ENCODE measurements at regions of chr19 and their contacts with region 1.

Region 1: GRCh38 chr19:29478578-29479565 is 46.9 kb upstream of the VSTM2B start:
- DNase-seq: peak; percentile 90
- ATAC-seq: peak; percentile 100
- H3K4me3 Mint-ChIP-seq: no peak overlapping the region
- H3K27ac Mint-ChIP-seq: no peak overlapping the region
- H3K4me1 Mint-ChIP-seq: no peaks in the 10 kb centered on the region
- H3K27me3 Mint-ChIP-seq: peaks cover 12% of the 10 kb centered on the region
- CTCF ChIP-seq: peak; percentile 39; the same call in 1 of the 2 replicates

Region 2: GRCh38 chr19:29268721-29269393 is 210.0 kb before region 1 on chr19:
- CTCF ChIA-PET with region 1: interaction called, 14 read pairs
- POLR2A ChIA-PET with region 1: no interaction called
- DNase-seq: peak; percentile 26
- ATAC-seq: peak; percentile 76
- H3K4me3 Mint-ChIP-seq: no peak overlapping the region
- H3K27ac Mint-ChIP-seq: no peak overlapping the region
- H3K4me1 Mint-ChIP-seq: peaks cover 30% of the 10 kb centered on the region
- H3K27me3 Mint-ChIP-seq: peaks cover 5% of the 10 kb centered on the region
- CTCF ChIP-seq: no peak

Region 3: GRCh38 chr19:29290853-29291252 is 188.0 kb before region 1 on chr19:
- CTCF ChIA-PET with region 1: interaction called, 10 read pairs
- POLR2A ChIA-PET with region 1: no interaction called
- DNase-seq: peak; percentile 26
- ATAC-seq: peak; percentile 62
- H3K4me3 Mint-ChIP-seq: no peak overlapping the region
- H3K27ac Mint-ChIP-seq: no peak overlapping the region
- H3K4me1 Mint-ChIP-seq: peaks cover 16% of the 10 kb centered on the region
- H3K27me3 Mint-ChIP-seq: peaks cover 3% of the 10 kb centered on the region; the same call in 1 of the 2 replicates
- CTCF ChIP-seq: no peak

Region 4: GRCh38 chr19:29467824-29468401 is 11.0 kb before region 1 on chr19:
- CTCF ChIA-PET with region 1: interaction called, 20 read pairs
- POLR2A ChIA-PET with region 1: no interaction called
- DNase-seq: peak; percentile 44
- ATAC-seq: peak; percentile 82
- H3K4me3 Mint-ChIP-seq: no peak overlapping the region
- H3K27ac Mint-ChIP-seq: no peak overlapping the region
- H3K4me1 Mint-ChIP-seq: no peaks in the 10 kb centered on the region; the same call in 1 of the 2 replicates
- H3K27me3 Mint-ChIP-seq: no peaks in the 10 kb centered on the region; the same call in 1 of the 2 replicates
- CTCF ChIP-seq: peak; percentile 16; the same call in 1 of the 2 replicates

Region 5: GRCh38 chr19:29497686-29498436 is 19.0 kb after region 1 on chr19:
- CTCF ChIA-PET with region 1: interaction called, 20 read pairs
- POLR2A ChIA-PET with region 1: no interaction called
- DNase-seq: no peak
- ATAC-seq: no peak
- H3K4me3 Mint-ChIP-seq: no peak overlapping the region
- H3K27ac Mint-ChIP-seq: no peak overlapping the region
- H3K4me1 Mint-ChIP-seq: peaks cover 20% of the 10 kb centered on the region
- H3K27me3 Mint-ChIP-seq: no peaks in the 10 kb centered on the region
- CTCF ChIP-seq: no peak

Measured in WTC11 (cell line).